Mucosa of descending colon (tissue), 3 donors: ENCODE measurements at regions of chr11 and their contacts with region 1.

Region 1: DNA sequence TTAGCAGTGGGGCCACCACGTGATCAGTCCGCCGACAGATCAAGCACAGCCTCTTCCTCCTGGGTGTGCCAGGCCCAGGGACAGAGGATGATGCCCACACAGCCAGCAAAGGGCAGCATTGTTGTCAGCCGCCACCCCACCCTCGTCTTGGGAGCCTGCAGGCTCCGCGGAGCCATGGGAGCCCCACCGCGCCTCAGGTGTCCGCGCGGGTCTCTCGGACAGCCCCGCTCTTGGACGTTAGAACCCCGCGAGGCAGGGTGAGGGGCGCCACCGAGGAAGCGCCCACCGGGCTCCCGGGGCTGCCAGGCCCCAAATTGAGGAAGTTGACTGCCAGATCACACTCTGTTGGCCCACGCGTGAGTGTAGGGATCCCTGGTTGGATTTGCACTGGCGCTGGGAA is 83.9 kb upstream of the MS4A8 start:
- DNase-seq: no peak
- ATAC-seq: no peak
- H3K4me3 ChIP-seq: no peak overlapping the region
- H3K4me1 ChIP-seq: no peaks in the 10 kb centered on the region
- CTCF ChIP-seq: no peak

Region 2: GRCh38 chr11:60363542-60364510 is 251.7 kb before region 1 on chr11:
- intact Hi-C with region 1: loop called in 1 of 2 experiments (anchors 2 kb)
- DNase-seq: peak in 1 of 3 donors; percentile 83
- ATAC-seq: peak; percentile 94
- H3K4me3 ChIP-seq: no peak overlapping the region
- H3K4me1 ChIP-seq: peaks cover 2% of the 10 kb centered on the region
- CTCF ChIP-seq: peak; percentile 51

Region 3: DNA sequence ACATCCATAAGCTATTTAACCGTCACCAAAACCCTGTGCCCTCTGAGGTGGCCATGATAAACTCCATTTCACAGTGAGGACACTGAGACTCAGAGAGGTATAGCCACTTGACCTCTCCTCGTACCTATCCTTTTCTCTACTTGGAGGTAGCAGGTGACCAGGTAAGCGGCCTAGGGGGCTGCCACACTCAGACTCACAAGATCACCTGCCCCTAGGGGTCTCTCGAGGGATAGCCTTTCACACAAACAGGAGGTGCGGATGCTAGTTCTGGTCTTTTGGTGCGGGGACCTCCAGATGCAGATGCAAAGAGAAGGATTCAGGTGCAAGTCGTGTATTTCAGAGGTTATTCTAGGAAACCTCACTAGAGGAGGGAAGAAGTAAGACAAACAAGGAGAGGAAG is 123.6 kb after region 1 on chr11:
- intact Hi-C with region 1: no loop called
- DNase-seq: no peak
- ATAC-seq: no peak
- H3K4me3 ChIP-seq: no peak overlapping the region
- H3K4me1 ChIP-seq: peaks cover 4% of the 10 kb centered on the region
- CTCF ChIP-seq: no peak